Common myeloid progenitor, CD34-positive (primary cell): ENCODE measurements at regions of chr20 and their contacts with region 1.

Region 1: DNA sequence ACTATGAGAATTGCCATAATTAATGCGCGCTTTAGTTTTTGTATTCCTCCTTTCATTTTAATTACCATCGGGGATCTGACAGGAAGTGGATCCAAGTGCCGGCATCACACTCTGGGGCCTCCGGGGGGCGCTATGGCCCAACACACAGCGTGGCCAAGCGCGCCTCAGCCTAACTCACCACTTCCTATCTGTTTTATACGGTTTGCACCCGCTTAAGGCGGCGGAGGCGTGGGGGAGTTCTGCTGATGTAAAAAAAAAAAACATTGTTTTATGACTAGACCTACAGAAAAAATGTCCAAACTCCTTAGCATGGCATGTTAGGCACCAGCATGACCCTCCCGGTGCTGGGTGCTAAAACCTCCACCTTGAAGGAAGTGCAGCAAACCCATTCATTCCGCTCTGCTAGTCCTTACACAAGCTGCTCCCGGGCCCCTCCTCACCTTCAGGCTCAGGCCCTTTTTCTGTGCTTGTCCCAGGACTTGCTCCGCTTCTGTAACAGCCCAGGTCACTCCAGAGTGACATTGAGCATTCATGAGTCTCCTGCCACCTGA is 4.5 kb upstream of the EBF4 start:
- DNase-seq: peak; percentile 76 to 93 (median 92)
- H3K4me3 ChIP-seq: peak overlapping the region in 2 of 7 experiments; percentile 34 to 64
- H3K27ac ChIP-seq: no peak overlapping the region
- H3K4me1 ChIP-seq: peaks cover 6 to 38% (median 29%) of the 10 kb centered on the region in 4 experiments
- H3K27me3 ChIP-seq: peaks cover 0 to 21% (median 8%) of the 10 kb centered on the region in 5 experiments

Region 2: DNA sequence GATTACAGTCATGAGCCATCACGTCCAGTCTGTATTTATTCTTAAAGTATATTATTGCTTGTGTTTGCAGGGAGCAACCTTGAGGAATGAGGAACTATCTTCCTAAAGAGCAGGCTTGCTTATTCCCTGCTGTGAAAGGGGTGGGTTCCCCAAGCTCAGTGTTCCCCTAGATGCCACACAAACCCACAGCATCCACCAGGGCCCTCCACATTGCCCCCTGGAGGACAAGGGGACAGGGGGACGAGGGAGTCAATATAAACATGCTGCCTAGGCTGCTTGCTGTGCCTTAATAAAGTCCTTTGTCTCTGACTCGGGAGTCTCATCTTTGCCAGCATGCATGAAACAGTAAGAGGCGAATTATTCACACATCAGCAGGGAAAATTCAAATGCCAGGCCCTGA is 16.1 kb before region 1 on chr20:
- CTCF ChIA-PET with region 1: interaction called, 56 read pairs
- POLR2A ChIA-PET with region 1: no interaction called
- DNase-seq: peak in 2 of 3 donors; percentile 53 to 54
- H3K4me3 ChIP-seq: no peak overlapping the region
- H3K27ac ChIP-seq: no peak overlapping the region
- H3K4me1 ChIP-seq: no peaks in the 10 kb centered on the region
- H3K27me3 ChIP-seq: peaks cover 0 to 3% (median 0%) of the 10 kb centered on the region in 5 experiments

Region 3: DNA sequence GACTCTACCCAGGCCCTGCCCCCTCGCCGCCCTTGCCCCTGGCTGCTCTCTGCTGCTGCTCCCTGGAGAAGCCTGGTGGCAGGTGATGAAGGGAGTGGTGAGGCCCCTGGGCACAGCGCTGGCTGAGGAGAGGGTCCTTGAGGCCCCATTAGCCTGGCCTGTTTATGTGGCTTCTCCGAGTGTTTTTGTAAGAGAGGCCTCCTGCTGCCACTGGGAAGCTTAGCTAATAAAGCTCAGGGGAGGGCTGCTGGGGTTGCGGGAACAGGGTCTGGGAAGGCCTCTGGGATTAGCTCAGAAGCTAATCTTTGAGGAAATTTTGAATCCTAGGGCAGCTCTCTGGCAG is 19.9 kb after region 1 on chr20:
- CTCF ChIA-PET with region 1: interaction called, 24 read pairs
- POLR2A ChIA-PET with region 1: interaction called, 9 read pairs
- DNase-seq: no peak
- H3K4me3 ChIP-seq: no peak overlapping the region
- H3K27ac ChIP-seq: no peak overlapping the region
- H3K4me1 ChIP-seq: peaks cover 0 to 29% (median 27%) of the 10 kb centered on the region in 4 experiments
- H3K27me3 ChIP-seq: peaks cover 0 to 4% (median 0%) of the 10 kb centered on the region in 5 experiments

Region 4: DNA sequence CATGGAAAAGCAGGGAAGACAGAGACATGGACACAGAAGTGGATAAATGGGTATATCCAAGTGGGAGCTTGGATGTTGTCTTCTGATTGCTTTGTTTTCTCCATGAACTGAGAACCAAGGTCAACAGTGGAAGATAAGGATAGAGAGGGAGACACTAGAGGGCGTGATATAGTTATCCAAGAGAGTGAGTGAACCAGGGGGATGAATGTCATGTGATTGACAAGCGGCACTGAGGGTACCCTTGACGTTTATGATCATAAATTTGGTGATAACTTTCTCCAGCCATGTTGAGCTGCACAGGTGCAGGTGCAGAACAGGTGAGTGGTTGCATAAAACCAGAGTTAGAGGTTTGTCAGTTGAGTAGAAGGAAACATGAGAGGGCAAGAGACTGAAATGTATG is 25.2 kb after region 1 on chr20:
- CTCF ChIA-PET with region 1: interaction called, 24 read pairs
- POLR2A ChIA-PET with region 1: no interaction called
- DNase-seq: peak; percentile 48 to 52 (median 50)
- H3K4me3 ChIP-seq: no peak overlapping the region
- H3K27ac ChIP-seq: no peak overlapping the region
- H3K4me1 ChIP-seq: peaks cover 0 to 5% (median 3%) of the 10 kb centered on the region in 4 experiments
- H3K27me3 ChIP-seq: no peaks in the 10 kb centered on the region

Region 5: DNA sequence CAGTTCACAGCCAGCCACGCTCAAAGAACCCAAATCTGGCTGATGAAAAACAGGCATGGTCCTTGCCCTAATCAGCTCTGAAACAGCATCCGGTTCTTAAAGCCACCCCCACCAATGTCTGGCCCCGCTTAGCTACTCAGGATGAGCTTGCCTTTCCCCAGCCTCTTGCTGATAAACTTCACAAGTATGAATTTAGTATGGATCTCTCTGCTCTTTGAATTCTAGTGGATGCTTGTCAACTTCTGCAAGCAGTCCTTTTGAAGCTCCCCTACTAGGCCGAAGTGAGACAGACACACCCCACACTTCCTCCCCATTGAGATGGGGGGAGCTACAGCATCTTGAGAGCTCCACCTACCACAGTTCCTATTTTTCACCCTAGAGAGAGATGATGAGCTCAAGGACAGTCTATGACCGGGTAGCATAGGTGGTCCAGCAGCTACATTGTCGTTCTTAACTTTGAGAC is 41.2 kb after region 1 on chr20:
- CTCF ChIA-PET with region 1: interaction called, 14 read pairs
- POLR2A ChIA-PET with region 1: no interaction called
- DNase-seq: peak; percentile 82 to 94 (median 89)
- H3K4me3 ChIP-seq: no peak overlapping the region
- H3K27ac ChIP-seq: no peak overlapping the region
- H3K4me1 ChIP-seq: peaks cover 0 to 15% (median 11%) of the 10 kb centered on the region in 4 experiments
- H3K27me3 ChIP-seq: no peaks in the 10 kb centered on the region

Region 6: DNA sequence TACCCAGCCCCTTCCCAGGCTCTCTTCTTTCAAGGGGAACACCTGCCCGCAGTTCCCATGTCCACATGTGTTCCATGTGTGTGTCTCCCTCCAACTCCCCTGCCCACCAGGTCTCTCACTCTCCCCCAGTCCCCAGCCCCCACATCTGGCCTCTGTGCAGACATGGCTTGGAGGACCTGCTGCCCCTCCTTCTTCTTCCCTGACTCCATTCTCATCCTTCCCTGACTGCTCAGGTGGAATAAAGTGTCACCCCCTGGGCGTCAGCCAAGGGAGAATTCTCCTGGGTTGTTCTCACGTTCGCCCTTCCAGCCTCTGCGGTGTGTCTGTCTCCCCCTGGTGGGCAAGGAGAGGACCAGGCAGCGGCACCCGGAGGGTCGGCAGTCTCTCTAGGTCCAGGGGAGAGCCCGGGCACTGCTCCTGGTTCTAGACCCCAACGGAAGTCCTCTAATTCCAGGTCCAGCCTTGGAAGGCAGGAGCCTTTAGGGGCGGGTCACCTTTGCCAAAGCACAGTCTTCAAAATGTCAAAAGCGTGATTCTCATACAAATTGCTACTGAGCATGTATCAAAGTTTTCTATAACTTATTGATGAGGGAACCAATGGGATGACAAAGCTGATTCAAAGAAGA is 54.9 kb after region 1 on chr20:
- CTCF ChIA-PET with region 1: interaction called, 45 read pairs
- POLR2A ChIA-PET with region 1: interaction called, 4 read pairs
- DNase-seq: peak; percentile 74 to 80 (median 77)
- H3K4me3 ChIP-seq: no peak overlapping the region
- H3K27ac ChIP-seq: no peak overlapping the region
- H3K4me1 ChIP-seq: peaks cover 2 to 25% (median 16%) of the 10 kb centered on the region in 4 experiments
- H3K27me3 ChIP-seq: peaks cover 0 to 3% (median 0%) of the 10 kb centered on the region in 5 experiments

Region 7: GRCh38 chr20:2752567-2753460 is 64.7 kb after region 1 on chr20:
- CTCF ChIA-PET with region 1: interaction called, 11 read pairs
- POLR2A ChIA-PET with region 1: interaction called, 4 read pairs
- DNase-seq: peak; percentile 52 to 63 (median 59)
- H3K4me3 ChIP-seq: peak overlapping the region in 6 of 7 experiments; percentile 27 to 69 (median 52)
- H3K27ac ChIP-seq: no peak overlapping the region
- H3K4me1 ChIP-seq: peaks cover 0 to 37% (median 34%) of the 10 kb centered on the region in 4 experiments
- H3K27me3 ChIP-seq: peaks cover 5 to 80% (median 27%) of the 10 kb centered on the region in 5 experiments